CD4-positive, alpha-beta memory T cell (primary cell): ENCODE measurements at regions of chr1 and their contacts with region 1.

Region 1: GRCh38 chr1:206635080-206635977 is at the start of gene DYRK3:
- DNase-seq: peak; percentile 84 to 91 (median 87)
- H3K4me3 ChIP-seq: peak within 1 kb of the TSS; percentile 37 to 87
- H3K4me3 Mint-ChIP-seq: peak within 1 kb of the TSS; percentile 87 to 96 (median 90)
- H3K27ac ChIP-seq: peak within 1 kb of the TSS; percentile 48
- H3K27ac Mint-ChIP-seq: peak within 1 kb of the TSS; percentile 85 to 96 (median 95)
- H3K4me1 ChIP-seq: peaks cover 15% of the 10 kb centered on the region
- H3K4me1 Mint-ChIP-seq: peaks cover 8 to 26% (median 13%) of the 10 kb centered on the region in 4 donors
- H3K27me3 ChIP-seq: no peaks in the 10 kb centered on the region
- H3K27me3 Mint-ChIP-seq: peaks cover 4 to 7% of the 10 kb centered on the region in 2 donors
- total RNA-seq, gene DYRK3: 0.78 to 1.2 TPM

Region 2: GRCh38 chr1:206507284-206508129 is 127.8 kb before region 1 on chr1 and contains the start of gene RASSF5:
- CTCF ChIA-PET with region 1: no interaction called
- POLR2A ChIA-PET with region 1: interaction called, 3 read pairs
- intact Hi-C with region 1: loop called (anchors 1 kb)
- DNase-seq: peak; percentile 76 to 81 (median 78)
- H3K4me3 ChIP-seq: peak within 1 kb of the TSS; percentile 39 to 58
- H3K4me3 Mint-ChIP-seq: peak within 1 kb of the TSS; percentile 80 to 89 (median 82)
- H3K27ac ChIP-seq: no peak within 1 kb of the TSS
- H3K27ac Mint-ChIP-seq: peak within 1 kb of the TSS in 4 of 7 donors; percentile 54 to 67 (median 64)
- H3K4me1 ChIP-seq: peaks cover 45% of the 10 kb centered on the region
- H3K4me1 Mint-ChIP-seq: peaks cover 17 to 55% (median 34%) of the 10 kb centered on the region in 4 donors
- H3K27me3 ChIP-seq: peaks cover 4% of the 10 kb centered on the region
- H3K27me3 Mint-ChIP-seq: peaks cover 6 to 8% of the 10 kb centered on the region in 2 donors
- total RNA-seq, gene RASSF5: 186 to 190 TPM

Region 3: DNA sequence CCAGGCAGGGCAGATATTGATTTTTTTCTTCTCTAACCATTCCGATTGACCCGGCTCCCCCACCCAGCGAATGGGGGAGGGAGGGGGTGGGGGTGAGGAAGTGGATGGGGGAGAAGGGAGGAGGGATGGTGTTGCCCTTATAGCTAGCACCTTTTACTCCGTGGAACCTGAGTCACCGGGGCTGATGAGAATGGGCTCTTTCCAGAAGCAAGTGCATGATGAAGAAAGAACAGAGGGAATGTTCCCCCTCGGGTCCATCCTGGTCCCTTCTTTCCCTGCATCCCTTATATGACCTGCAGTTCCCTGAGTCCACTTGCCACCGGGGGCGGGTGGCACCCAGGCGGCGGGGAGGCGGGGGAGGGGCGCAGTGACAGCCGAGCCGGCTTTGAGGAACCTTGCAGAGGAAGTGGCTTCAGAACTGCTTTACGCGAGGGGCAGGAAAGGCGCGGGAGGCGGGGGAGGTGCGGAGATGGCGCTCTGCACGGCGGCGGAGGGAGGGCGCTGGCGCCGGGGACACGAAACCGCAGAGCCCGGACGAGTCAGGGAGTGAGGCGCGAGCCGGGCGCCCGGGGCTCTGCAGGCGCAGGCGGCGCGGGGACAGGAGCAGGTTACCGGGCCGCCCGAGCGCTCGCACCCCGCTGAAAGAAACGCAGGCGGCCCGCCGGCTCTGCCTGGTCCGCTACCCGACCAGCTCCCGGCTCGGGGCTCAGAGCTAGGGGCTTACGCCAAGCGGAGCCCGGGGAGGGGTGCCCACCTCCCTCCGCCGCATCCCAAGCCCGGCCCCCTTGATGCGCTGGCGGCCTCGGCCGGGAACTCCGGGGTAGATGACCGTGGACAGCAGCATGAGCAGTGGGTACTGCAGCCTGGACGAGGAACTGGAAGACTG is 78.3 kb before region 1 on chr1:
- CTCF ChIA-PET with region 1: interaction called, 4 read pairs
- POLR2A ChIA-PET with region 1: no interaction called
- intact Hi-C with region 1: loop called (anchors 2 kb)
- DNase-seq: peak; percentile 87 to 93 (median 90)
- H3K4me3 ChIP-seq: peak overlapping the region; percentile 95 to 96
- H3K4me3 Mint-ChIP-seq: peak overlapping the region; percentile 90 to 99 (median 98)
- H3K27ac ChIP-seq: peak overlapping the region; percentile 77
- H3K27ac Mint-ChIP-seq: peak overlapping the region; percentile 93 to 98 (median 96)
- H3K4me1 ChIP-seq: peaks cover 76% of the 10 kb centered on the region
- H3K4me1 Mint-ChIP-seq: peaks cover 49 to 93% (median 63%) of the 10 kb centered on the region in 4 donors
- H3K27me3 ChIP-seq: no peaks in the 10 kb centered on the region
- H3K27me3 Mint-ChIP-seq: no peaks in the 10 kb centered on the region

Region 4: GRCh38 chr1:206612129-206612876 is 23.0 kb before region 1 on chr1 and contains the start of gene EIF2D:
- CTCF ChIA-PET with region 1: interaction called, 30 read pairs
- POLR2A ChIA-PET with region 1: interaction called, 19 read pairs
- intact Hi-C with region 1: loop called (anchors 1 kb)
- DNase-seq: peak; percentile 90 to 96 (median 92)
- H3K4me3 ChIP-seq: peak within 1 kb of the TSS; percentile 62 to 77
- H3K4me3 Mint-ChIP-seq: peak within 1 kb of the TSS; percentile 91 to 95 (median 93)
- H3K27ac ChIP-seq: peak within 1 kb of the TSS; percentile 80
- H3K27ac Mint-ChIP-seq: peak within 1 kb of the TSS; percentile 87 to 98 (median 96)
- H3K4me1 ChIP-seq: peaks cover 12% of the 10 kb centered on the region
- H3K4me1 Mint-ChIP-seq: peaks cover 12 to 34% (median 21%) of the 10 kb centered on the region in 4 donors
- H3K27me3 ChIP-seq: no peaks in the 10 kb centered on the region
- H3K27me3 Mint-ChIP-seq: no peaks in the 10 kb centered on the region
- total RNA-seq, gene EIF2D: 53.5 to 54.5 TPM

Region 5: GRCh38 chr1:206646504-206646903 is 11.2 kb after region 1 on chr1:
- CTCF ChIA-PET with region 1: interaction called, 12 read pairs
- POLR2A ChIA-PET with region 1: interaction called, 3 read pairs
- intact Hi-C with region 1: no loop called
- DNase-seq: no peak
- H3K4me3 ChIP-seq: no peak overlapping the region
- H3K4me3 Mint-ChIP-seq: no peak overlapping the region
- H3K27ac ChIP-seq: no peak overlapping the region
- H3K27ac Mint-ChIP-seq: no peak overlapping the region
- H3K4me1 ChIP-seq: no peaks in the 10 kb centered on the region
- H3K4me1 Mint-ChIP-seq: no peaks in the 10 kb centered on the region
- H3K27me3 ChIP-seq: no peaks in the 10 kb centered on the region
- H3K27me3 Mint-ChIP-seq: no peaks in the 10 kb centered on the region

Region 6: GRCh38 chr1:206808615-206809014 is 173.3 kb after region 1 on chr1:
- CTCF ChIA-PET with region 1: interaction called, 6 read pairs
- POLR2A ChIA-PET with region 1: no interaction called
- intact Hi-C with region 1: loop called (anchors 1 kb)
- DNase-seq: peak; percentile 61 to 68 (median 63)
- H3K4me3 ChIP-seq: no peak overlapping the region
- H3K4me3 Mint-ChIP-seq: no peak overlapping the region
- H3K27ac ChIP-seq: no peak overlapping the region
- H3K27ac Mint-ChIP-seq: peak overlapping the region in 6 of 7 donors; percentile 20 to 90 (median 83)
- H3K4me1 ChIP-seq: peaks cover 35% of the 10 kb centered on the region
- H3K4me1 Mint-ChIP-seq: peaks cover 24 to 56% (median 43%) of the 10 kb centered on the region in 4 donors
- H3K27me3 ChIP-seq: no peaks in the 10 kb centered on the region
- H3K27me3 Mint-ChIP-seq: no peaks in the 10 kb centered on the region

Region 7: DNA sequence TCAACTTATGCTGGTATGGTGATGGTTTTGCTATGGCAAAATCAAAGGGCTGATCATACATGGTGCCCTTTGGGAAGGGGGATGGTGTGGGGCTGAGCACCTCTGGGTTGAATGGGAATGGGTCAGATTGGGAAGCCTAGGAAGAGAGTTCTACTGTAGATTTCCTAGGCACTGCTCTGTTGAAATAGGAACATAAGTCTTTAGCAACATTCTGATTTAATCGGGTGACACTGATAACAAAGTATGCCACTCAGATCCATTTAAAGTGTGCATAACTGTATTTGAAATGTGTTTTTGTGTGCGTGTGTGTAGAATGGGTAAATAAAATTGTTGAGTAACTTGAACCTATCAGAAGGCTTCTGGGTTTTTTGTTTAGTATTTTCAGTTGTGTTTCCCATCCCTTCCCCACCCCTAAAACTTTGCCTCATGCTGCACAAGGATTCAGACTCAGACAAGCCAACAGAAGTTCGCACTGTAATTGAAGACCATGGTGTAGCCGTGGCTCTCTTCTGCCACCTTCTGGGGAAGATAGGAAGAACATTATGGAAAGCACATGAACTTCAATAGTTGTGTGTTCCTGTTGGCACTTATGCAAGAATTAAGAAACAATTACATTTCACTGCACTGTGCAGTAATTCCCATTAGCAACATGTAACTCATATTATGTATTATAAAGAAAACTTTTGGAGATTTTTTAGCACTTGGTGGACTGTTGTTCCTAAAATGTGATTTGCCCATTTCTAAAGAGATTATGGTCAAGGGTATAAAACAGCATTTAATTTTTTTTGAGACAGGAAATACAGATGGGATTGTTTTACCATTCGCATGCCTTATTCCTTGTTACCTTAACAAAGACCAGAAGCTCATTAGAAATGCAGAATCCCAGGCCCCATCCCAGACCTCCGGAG is 442.4 kb after region 1 on chr1:
- CTCF ChIA-PET with region 1: no interaction called
- POLR2A ChIA-PET with region 1: no interaction called
- intact Hi-C with region 1: loop called (anchors 10 kb)
- DNase-seq: peak; percentile 69 to 75 (median 72)
- H3K4me3 ChIP-seq: no peak overlapping the region
- H3K4me3 Mint-ChIP-seq: no peak overlapping the region
- H3K27ac ChIP-seq: no peak overlapping the region
- H3K27ac Mint-ChIP-seq: no peak overlapping the region
- H3K4me1 ChIP-seq: no peaks in the 10 kb centered on the region
- H3K4me1 Mint-ChIP-seq: peaks cover 0 to 2% (median under 1%) of the 10 kb centered on the region in 4 donors
- H3K27me3 ChIP-seq: no peaks in the 10 kb centered on the region
- H3K27me3 Mint-ChIP-seq: peaks cover 7 to 11% of the 10 kb centered on the region in 2 donors